ENCODE measurements at regions of chr12 and their contacts with region 1.

Region 1: GRCh38 chr12:569803-570434 is 93.3 kb downstream of the NINJ2 start:
- DNase-seq: peak; percentile 86 to 94 (median 91)
- H3K4me3 ChIP-seq: peak overlapping the region in 3 of 4 donors; percentile 16 to 60 (median 44)
- H3K27ac ChIP-seq: peak overlapping the region in 4 of 5 donors; percentile 84 to 97 (median 94)
- H3K4me1 ChIP-seq: peaks cover 12 to 28% of the 10 kb centered on the region in 2 donors
- H3K27me3 ChIP-seq: no peaks in the 10 kb centered on the region
- CTCF ChIP-seq: peak; percentile 90 to 97 (median 94)
- POLR2A ChIP-seq: peak in 1 of 2 donors; percentile 7

Region 2: GRCh38 chr12:442235-442884 is 127.6 kb before region 1 on chr12:
- intact Hi-C with region 1: no loop called
- DNase-seq: peak; percentile 40 to 86 (median 62)
- H3K4me3 ChIP-seq: no peak overlapping the region
- H3K27ac ChIP-seq: no peak overlapping the region
- H3K4me1 ChIP-seq: no peaks in the 10 kb centered on the region
- H3K27me3 ChIP-seq: no peaks in the 10 kb centered on the region
- CTCF ChIP-seq: peak; percentile 75 to 81 (median 78)
- POLR2A ChIP-seq: no peak

Region 3: DNA sequence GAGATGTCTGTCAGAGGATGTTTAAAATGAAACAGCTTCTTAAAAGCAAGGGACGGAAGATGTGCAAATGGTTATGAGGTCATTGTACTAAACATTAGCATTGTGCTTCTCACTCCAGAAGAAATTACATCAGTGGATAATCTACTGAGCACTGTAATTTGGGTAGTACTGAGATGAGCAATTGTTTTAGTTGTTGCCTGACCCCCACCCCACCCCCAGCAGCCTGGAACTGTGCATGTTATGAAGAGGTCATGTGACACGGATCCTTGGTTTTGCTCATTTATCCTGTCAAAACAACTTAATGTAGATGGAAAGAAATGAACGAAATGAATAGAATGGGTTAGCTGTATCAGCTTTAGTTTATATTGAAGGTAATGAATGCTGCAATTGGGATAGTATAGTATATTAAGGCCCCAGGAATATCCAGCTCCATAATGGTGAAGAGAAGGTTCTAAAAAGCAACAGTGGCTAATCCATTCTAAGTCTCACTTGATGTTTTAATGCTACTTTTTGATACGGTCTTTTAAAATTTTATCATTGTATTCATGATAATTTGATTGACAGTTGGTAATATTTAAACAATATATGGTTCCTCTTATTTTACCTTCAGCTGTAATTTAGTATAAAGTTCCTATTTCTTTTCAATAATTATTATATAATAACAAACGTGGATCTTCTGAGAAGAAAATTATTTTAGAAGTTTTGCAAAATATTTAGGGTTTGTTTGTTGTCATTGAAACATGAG is 240.9 kb after region 1 on chr12:
- intact Hi-C with region 1: loop called (anchors 5 kb)
- DNase-seq: no peak
- H3K4me3 ChIP-seq: no peak overlapping the region
- H3K27ac ChIP-seq: no peak overlapping the region
- H3K4me1 ChIP-seq: peaks cover 14 to 29% of the 10 kb centered on the region in 2 donors
- H3K27me3 ChIP-seq: no peaks in the 10 kb centered on the region
- CTCF ChIP-seq: no peak
- POLR2A ChIP-seq: no peak

Region 4: DNA sequence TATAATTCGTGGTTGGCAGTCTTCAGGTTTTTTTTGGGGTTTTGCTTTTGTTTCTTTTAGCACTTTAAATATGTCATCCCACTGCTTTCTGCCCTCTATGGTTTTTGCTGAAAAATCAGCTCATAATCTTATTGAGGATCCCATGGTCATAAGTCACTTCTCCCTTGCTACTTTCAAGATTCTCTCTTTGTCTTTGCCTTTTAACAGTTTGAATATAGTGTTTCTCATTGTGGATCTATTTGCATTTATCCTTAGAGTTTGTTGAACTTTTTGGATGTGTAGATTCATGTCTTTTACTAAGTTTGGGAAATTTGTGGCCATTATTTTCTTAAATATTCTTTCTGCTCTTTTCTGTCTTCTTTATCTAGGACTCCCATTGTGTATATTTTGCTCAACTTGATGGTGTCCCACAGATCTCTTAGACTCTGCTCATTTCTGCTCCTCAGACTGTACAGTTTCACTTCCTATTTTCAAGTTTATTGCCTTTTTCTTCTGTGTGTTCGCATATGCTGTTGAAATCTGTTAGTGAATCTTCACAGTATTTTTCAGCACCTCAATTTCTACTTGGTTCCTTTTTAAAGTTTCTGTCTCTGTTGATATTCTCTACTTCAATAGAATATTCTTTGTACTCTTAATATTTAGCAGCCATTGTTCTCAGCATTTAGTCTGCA is 253.2 kb after region 1 on chr12:
- intact Hi-C with region 1: loop called in 1 of 2 experiments (anchors 5 kb)
- DNase-seq: no peak
- H3K4me3 ChIP-seq: no peak overlapping the region
- H3K27ac ChIP-seq: no peak overlapping the region
- H3K4me1 ChIP-seq: peaks cover 0 to 12% of the 10 kb centered on the region in 2 donors
- H3K27me3 ChIP-seq: no peaks in the 10 kb centered on the region
- CTCF ChIP-seq: no peak
- POLR2A ChIP-seq: no peak

Region 5: GRCh38 chr12:949453-950191 is 379.7 kb after region 1 on chr12 and contains the start of gene RAD52:
- intact Hi-C with region 1: loop called (anchors 5 to 10 kb)
- DNase-seq: peak; percentile 96 to 99 (median 97)
- H3K4me3 ChIP-seq: peak within 1 kb of the TSS; percentile 48 to 94 (median 72)
- H3K27ac ChIP-seq: peak within 1 kb of the TSS; percentile 75 to 90 (median 87)
- H3K4me1 ChIP-seq: peaks cover 0 to 16% of the 10 kb centered on the region in 2 donors
- H3K27me3 ChIP-seq: no peaks in the 10 kb centered on the region
- CTCF ChIP-seq: peak; percentile 96 to 100 (median 99)
- POLR2A ChIP-seq: peak; percentile 74 to 85
- total RNA-seq, gene RAD52: 5.5 to 22.6 (median 10.7) TPM

Region 6: DNA sequence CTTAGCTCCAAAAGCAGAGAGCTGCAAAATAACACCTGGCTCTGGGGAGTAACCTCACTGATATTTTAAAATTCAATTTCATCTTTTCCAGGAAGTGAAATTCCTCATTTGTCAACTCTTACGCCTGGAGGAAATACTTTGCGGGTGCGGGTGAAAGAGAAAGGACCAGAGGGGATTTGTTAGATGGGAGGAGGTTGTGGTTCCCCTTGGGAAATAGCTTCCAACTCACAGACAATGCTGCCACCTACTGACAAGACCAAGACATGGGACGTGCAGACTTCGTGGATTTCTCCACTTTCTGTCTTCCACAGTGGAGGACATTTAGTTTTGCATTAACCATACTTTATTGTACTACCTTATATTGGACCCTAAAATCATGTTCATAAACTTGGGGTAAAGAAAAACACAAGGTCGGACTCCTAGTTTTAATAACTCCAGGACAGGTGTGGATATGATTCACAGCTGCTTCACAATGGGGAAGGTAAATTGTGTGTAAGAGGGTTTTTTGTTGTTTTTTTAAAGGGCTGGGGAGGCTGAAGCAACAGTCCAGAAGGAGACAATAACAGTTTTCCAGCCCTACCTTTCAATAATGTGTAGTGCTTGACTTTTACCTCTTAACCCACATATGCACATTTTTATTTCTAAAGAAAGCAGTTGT is 1013.6 kb after region 1 on chr12:
- intact Hi-C with region 1: loop called in 1 of 2 experiments (anchors 10 kb)
- DNase-seq: peak; percentile 63 to 90 (median 75)
- H3K4me3 ChIP-seq: peak overlapping the region in 1 of 4 donors; percentile 43
- H3K27ac ChIP-seq: no peak overlapping the region
- H3K4me1 ChIP-seq: peaks cover 0 to 11% of the 10 kb centered on the region in 2 donors
- H3K27me3 ChIP-seq: no peaks in the 10 kb centered on the region
- CTCF ChIP-seq: peak; percentile 60 to 96 (median 91)
- POLR2A ChIP-seq: no peak